ENCODE measurements at regions of chr9 and their contacts with region 1.

Region 1: GRCh38 chr9:121321016-121321503 is 49.0 kb downstream of the STOM start:
- DNase-seq: peak; percentile 38
- H3K4me3 Mint-ChIP-seq: no peak overlapping the region
- H3K27ac Mint-ChIP-seq: no peak overlapping the region
- H3K4me1 Mint-ChIP-seq: peaks cover 13% of the 10 kb centered on the region
- H3K27me3 Mint-ChIP-seq: no peaks in the 10 kb centered on the region

Region 2: GRCh38 chr9:121213136-121213806 is 107.8 kb before region 1 on chr9:
- CTCF ChIA-PET with region 1: interaction called, 23 read pairs
- intact Hi-C with region 1: loop called (anchors 1 kb)
- DNase-seq: peak; percentile 86
- H3K4me3 Mint-ChIP-seq: no peak overlapping the region
- H3K27ac Mint-ChIP-seq: no peak overlapping the region
- H3K4me1 Mint-ChIP-seq: peaks cover 4% of the 10 kb centered on the region
- H3K27me3 Mint-ChIP-seq: no peaks in the 10 kb centered on the region

Region 3: DNA sequence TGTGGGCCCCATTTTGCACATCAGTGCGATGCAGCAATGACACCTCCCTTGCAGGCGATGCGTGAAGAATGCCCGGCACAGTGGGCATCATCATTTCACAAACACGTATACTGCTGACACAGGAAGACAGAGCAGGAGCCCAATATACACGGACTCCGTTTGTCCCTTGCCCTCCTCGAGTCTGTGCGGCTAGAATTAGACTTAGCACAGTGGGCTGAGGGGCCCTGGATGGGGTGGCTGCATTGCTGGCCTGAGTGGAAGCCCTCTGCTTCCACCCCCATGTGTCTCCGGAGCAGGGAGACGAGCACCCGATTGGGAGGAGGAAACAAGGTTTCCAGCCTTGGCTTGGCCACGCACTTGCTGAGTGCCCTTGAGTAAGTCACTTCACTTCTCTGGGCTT is 12.3 kb before region 1 on chr9:
- CTCF ChIA-PET with region 1: interaction called, 10 read pairs
- intact Hi-C with region 1: no loop called
- DNase-seq: no peak
- H3K4me3 Mint-ChIP-seq: no peak overlapping the region
- H3K27ac Mint-ChIP-seq: no peak overlapping the region
- H3K4me1 Mint-ChIP-seq: no peaks in the 10 kb centered on the region
- H3K27me3 Mint-ChIP-seq: no peaks in the 10 kb centered on the region

Region 4: DNA sequence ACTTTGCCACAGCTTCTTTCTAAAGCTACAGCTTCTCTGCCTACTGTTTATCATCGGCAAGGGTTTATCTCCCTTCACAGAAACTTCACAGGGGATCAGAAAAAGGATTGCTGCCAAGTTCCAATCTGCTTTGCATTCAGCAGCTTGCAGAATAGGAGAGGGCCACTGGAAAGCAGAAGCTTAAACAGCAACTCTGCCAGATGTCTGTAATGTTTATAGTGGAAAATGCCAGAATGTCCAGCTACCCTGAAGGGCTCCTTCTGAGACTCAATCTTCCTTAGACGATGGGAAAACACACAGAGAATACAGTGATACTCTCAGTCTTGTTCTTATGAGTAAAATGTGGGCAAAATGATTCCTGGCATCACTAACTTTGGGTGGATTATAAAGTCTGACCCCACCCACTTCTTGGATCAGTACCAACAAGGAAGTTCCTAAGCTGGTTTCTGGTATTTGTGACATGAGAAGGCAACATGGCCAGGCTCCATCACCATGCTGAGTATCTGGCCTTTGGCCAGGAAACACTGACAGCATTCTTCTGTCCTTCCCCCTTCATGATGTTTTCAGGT is 30.0 kb after region 1 on chr9:
- CTCF ChIA-PET with region 1: interaction called, 16 read pairs
- intact Hi-C with region 1: loop called (anchors 1 kb)
- DNase-seq: no peak
- H3K4me3 Mint-ChIP-seq: no peak overlapping the region
- H3K27ac Mint-ChIP-seq: no peak overlapping the region
- H3K4me1 Mint-ChIP-seq: peaks cover 18% of the 10 kb centered on the region
- H3K27me3 Mint-ChIP-seq: no peaks in the 10 kb centered on the region

Region 5: DNA sequence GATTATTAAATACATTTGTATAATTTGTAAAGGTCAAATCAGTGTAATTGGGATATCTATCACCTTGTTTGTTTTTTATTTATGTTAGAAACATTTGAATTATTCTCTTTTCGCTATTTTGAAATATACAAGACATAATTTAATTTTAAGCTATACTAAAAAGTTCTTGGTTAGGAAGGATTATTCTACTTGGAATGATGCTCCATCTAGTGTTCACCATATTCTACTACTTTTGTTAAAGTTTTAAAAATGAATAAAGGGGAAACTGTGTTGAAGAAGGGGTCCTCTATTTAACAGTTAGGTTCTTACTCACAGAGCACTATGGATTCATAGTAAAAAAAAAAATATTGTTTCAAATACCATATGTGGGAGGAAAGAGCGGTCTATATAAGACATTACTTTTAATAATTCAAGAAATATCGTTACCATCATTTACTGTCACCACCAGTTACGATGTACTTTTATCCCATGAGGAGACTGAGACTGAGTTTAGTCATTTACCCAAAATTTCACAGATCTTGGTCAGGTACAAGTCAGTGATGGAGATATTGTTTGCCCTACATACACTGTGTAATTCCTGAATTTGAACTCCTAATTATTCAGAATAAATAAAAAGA is 55.3 kb after region 1 on chr9:
- CTCF ChIA-PET with region 1: interaction called, 43 read pairs
- intact Hi-C with region 1: loop called (anchors 1 kb)
- DNase-seq: no peak
- H3K4me3 Mint-ChIP-seq: no peak overlapping the region
- H3K27ac Mint-ChIP-seq: no peak overlapping the region
- H3K4me1 Mint-ChIP-seq: peaks cover 8% of the 10 kb centered on the region
- H3K27me3 Mint-ChIP-seq: no peaks in the 10 kb centered on the region

Region 6: GRCh38 chr9:121411993-121412392 is 90.9 kb after region 1 on chr9:
- CTCF ChIA-PET with region 1: interaction called, 315 read pairs
- intact Hi-C with region 1: no loop called
- DNase-seq: no peak
- H3K4me3 Mint-ChIP-seq: no peak overlapping the region
- H3K27ac Mint-ChIP-seq: no peak overlapping the region
- H3K4me1 Mint-ChIP-seq: no peaks in the 10 kb centered on the region
- H3K27me3 Mint-ChIP-seq: no peaks in the 10 kb centered on the region

Region 7: DNA sequence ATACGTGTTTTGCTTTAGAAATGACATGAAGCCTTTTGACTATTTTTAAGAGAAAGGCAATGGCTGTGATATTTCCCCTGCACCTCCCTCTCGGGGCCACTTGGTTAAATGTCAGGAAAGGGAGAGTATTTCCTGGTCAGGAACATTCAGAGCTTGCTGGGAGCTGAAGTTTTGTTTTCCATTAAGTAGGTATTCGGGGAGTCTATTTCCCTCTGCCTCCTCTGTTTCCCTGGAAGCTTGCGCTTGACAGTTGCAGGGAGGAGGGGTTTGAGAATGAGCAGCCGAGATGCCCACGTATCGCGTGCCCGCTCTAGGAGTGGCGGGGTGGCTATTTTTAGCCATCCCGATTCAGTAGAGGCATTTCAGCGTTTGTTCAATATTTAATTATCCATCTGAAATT is 337.1 kb after region 1 on chr9:
- CTCF ChIA-PET with region 1: no interaction called
- intact Hi-C with region 1: no loop called
- DNase-seq: no peak
- H3K4me3 Mint-ChIP-seq: no peak overlapping the region
- H3K27ac Mint-ChIP-seq: no peak overlapping the region
- H3K4me1 Mint-ChIP-seq: no peaks in the 10 kb centered on the region
- H3K27me3 Mint-ChIP-seq: peaks cover 27% of the 10 kb centered on the region